ENCODE measurements at regions of chr13 and their contacts with region 1.

Region 1: DNA sequence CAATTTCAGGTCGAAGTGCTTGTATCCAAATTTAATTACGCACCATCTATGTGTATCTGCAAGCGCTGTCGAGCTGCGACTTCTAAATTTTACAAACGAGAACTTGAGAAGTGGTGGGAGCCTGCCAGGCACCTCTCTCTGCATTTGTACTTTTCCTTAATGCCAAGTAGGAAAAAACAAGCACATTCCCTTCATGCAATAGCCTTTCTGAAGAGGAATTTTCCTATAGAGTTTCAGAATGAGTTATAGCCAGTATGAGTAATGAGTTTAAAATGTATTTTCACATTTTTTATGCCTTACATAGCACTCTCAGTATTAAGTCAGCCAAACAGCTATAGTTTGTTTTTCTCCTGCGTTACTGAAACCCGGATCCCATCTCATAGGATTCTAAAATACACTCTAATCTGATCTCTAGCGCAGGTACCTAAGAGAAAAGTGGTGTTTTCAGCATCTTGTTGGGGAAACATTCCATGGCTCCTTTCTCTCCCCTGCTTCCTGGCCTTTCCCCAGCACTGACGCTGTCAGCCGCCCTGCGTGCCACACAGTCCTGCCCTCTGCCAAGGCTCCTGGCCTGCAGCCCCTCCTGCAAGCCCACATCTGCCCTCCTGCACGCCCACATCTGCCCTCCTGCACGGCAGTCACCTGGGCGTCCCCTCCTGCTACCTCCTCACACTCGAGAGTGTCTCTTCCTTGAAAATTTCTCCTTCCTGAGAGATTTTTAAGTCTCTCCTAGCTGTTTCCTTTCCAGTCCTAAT is 526.9 kb downstream of the MYO16 start:
- DNase-seq: no peak
- H3K4me3 ChIP-seq: no peak overlapping the region
- H3K4me3 Mint-ChIP-seq: peak overlapping the region; percentile 2
- H3K27ac Mint-ChIP-seq: peak overlapping the region; percentile 43
- H3K4me1 ChIP-seq: peaks cover 31% of the 10 kb centered on the region
- H3K4me1 Mint-ChIP-seq: peaks cover 35% of the 10 kb centered on the region
- H3K27me3 ChIP-seq: no peaks in the 10 kb centered on the region
- H3K27me3 Mint-ChIP-seq: no peaks in the 10 kb centered on the region
- CTCF ChIP-seq: no peak

Region 2: GRCh38 chr13:109211616-109212015 is 55.3 kb after region 1 on chr13:
- CTCF ChIA-PET with region 1: no interaction called
- POLR2A ChIA-PET with region 1: no interaction called
- intact Hi-C with region 1: loop called (anchors 5 kb)
- DNase-seq: peak; percentile 84 to 86
- H3K4me3 ChIP-seq: no peak overlapping the region
- H3K4me3 Mint-ChIP-seq: peak overlapping the region; percentile 32
- H3K27ac Mint-ChIP-seq: peak overlapping the region; percentile 78
- H3K4me1 ChIP-seq: peaks cover 46% of the 10 kb centered on the region
- H3K4me1 Mint-ChIP-seq: peaks cover 26% of the 10 kb centered on the region
- H3K27me3 ChIP-seq: no peaks in the 10 kb centered on the region
- H3K27me3 Mint-ChIP-seq: no peaks in the 10 kb centered on the region
- CTCF ChIP-seq: no peak

Region 3: DNA sequence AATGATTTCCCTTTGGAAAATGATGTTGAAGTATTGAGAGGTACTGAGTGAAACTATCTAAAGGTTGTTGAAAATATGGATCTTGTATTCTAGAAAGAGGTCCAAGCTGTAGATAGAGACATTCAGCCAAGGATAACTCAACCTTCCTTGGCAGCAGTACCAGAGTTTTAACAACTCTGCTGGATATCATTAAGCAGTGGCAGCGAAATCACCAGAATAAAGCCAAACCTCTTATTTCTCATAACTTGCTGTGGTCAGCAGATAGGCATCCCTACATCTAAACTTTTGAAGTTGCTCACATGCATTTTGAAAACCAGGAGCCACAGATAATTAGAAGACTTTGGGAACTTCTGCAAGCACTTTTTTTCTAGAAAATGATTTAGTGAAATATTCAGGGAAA is 70.3 kb after region 1 on chr13:
- CTCF ChIA-PET with region 1: no interaction called
- POLR2A ChIA-PET with region 1: no interaction called
- intact Hi-C with region 1: no loop called
- DNase-seq: no peak
- H3K4me3 ChIP-seq: no peak overlapping the region
- H3K4me3 Mint-ChIP-seq: no peak overlapping the region
- H3K27ac Mint-ChIP-seq: no peak overlapping the region
- H3K4me1 ChIP-seq: no peaks in the 10 kb centered on the region
- H3K4me1 Mint-ChIP-seq: no peaks in the 10 kb centered on the region
- H3K27me3 ChIP-seq: no peaks in the 10 kb centered on the region
- H3K27me3 Mint-ChIP-seq: no peaks in the 10 kb centered on the region
- CTCF ChIP-seq: no peak

Region 4: GRCh38 chr13:109672545-109672944 is 516.2 kb after region 1 on chr13:
- CTCF ChIA-PET with region 1: no interaction called
- POLR2A ChIA-PET with region 1: no interaction called
- intact Hi-C with region 1: no loop called
- DNase-seq: no peak
- H3K4me3 ChIP-seq: no peak overlapping the region
- H3K4me3 Mint-ChIP-seq: no peak overlapping the region
- H3K27ac Mint-ChIP-seq: no peak overlapping the region
- H3K4me1 ChIP-seq: no peaks in the 10 kb centered on the region
- H3K4me1 Mint-ChIP-seq: no peaks in the 10 kb centered on the region
- H3K27me3 ChIP-seq: no peaks in the 10 kb centered on the region
- H3K27me3 Mint-ChIP-seq: no peaks in the 10 kb centered on the region
- CTCF ChIP-seq: no peak

Measured in Caco-2 (cell line).